ENCODE measurements at regions of chr17 and their contacts with region 1.

Region 1: DNA sequence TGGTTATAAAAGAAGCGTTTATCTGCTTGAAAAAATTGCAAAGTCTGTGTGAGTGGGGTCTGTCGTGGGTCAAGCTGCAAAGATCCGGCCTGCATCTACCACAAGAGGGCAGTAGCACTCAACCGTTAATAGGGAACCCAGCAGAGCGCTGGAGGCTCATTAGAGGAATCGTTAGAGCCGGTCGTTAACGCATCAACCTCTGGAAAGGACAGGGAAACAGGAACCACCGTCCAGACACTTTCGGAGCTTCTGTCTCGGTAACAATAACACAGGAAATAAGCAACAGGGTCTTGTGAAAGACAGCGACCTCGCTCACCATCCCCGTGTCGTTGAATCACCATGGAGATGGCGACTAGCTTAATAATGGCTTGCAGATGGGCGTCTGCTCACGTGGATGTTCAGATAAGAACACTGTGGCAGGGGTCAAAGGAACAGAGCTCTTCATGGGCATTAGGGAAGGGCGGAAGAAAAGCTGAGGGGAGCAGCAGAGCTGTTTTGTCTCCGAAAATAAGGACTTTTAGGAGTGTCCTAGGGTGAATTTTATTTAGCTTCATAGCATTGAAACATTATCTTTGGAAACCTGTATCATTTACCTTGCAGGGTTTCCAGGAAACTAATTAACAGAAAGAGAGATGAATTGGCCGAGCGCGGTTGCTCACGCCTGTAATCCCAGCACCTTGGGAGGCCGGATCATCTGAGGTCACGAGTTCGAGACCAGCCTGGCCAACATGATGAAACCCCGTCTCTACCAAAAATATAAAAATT is 11.9 kb upstream of the NSRP1 start:
- DNase-seq: peak; percentile 83
- H3K4me3 ChIP-seq: peak overlapping the region; percentile 4 to 54 (median 22)
- H3K27ac ChIP-seq: peak overlapping the region; percentile 58 to 66 (median 60)
- H3K4me1 ChIP-seq: peaks cover 0 to 9% (median 5%) of the 10 kb centered on the region in 4 donors
- H3K27me3 ChIP-seq: no peaks in the 10 kb centered on the region
- CTCF ChIP-seq: peak; percentile 84 to 88 (median 86)
- EP300 ChIP-seq: no peak
- POLR2A ChIP-seq: no peak

Region 2: DNA sequence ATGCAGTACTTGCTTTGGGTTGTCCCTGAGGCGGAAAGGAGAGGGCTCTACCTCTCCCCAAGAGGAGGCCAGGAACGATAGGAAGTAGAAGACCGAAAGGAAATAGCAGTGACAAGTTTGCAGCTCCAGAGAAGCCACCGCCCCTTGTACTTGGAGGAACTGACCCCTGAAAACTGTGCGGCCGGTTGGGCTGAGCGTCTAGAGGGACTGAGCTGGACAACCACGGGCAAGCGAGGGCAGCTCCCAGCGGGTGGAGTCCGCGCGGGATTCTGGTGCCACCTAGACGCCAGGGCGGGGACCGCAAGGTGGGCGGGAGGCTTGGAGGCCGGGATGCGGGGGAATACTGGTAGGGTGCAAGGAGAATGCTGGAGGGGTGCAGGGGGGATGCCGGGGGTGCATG is 132.0 kb after region 1 on chr17:
- in situ Hi-C with region 1: no loop called
- intact Hi-C with region 1: loop called (anchors 5 kb)
- DNase-seq: peak; percentile 66
- H3K4me3 ChIP-seq: peak overlapping the region in 1 of 4 donors; percentile 49
- H3K27ac ChIP-seq: no peak overlapping the region
- H3K4me1 ChIP-seq: peaks cover 8 to 24% (median 18%) of the 10 kb centered on the region in 4 donors
- H3K27me3 ChIP-seq: peaks cover 78% of the 10 kb centered on the region
- CTCF ChIP-seq: peak; percentile 33 to 50 (median 40)
- EP300 ChIP-seq: no peak
- POLR2A ChIP-seq: no peak

Region 3: GRCh38 chr17:30323895-30324319 is 219.2 kb after region 1 on chr17:
- in situ Hi-C with region 1: loop called in 3 of 4 experiments (anchors 10 to 25 kb)
- intact Hi-C with region 1: no loop called
- DNase-seq: peak; percentile 49
- H3K4me3 ChIP-seq: no peak overlapping the region
- H3K27ac ChIP-seq: no peak overlapping the region
- H3K4me1 ChIP-seq: peaks cover 0 to 9% (median 0%) of the 10 kb centered on the region in 4 donors
- H3K27me3 ChIP-seq: no peaks in the 10 kb centered on the region
- CTCF ChIP-seq: no peak
- EP300 ChIP-seq: no peak
- POLR2A ChIP-seq: no peak

Measured in transverse colon (tissue), 4 donors.